ENCODE measurements at regions of chr3 and their contacts with region 1.

Region 1: GRCh38 chr3:113867506-113867905 is 28.9 kb downstream of the GRAMD1C start:
- DNase-seq: no peak
- H3K4me3 ChIP-seq: no peak overlapping the region
- H3K27ac ChIP-seq: no peak overlapping the region
- H3K4me1 ChIP-seq: no peaks in the 10 kb centered on the region
- H3K27me3 ChIP-seq: no peaks in the 10 kb centered on the region
- CTCF ChIP-seq: no peak

Region 2: GRCh38 chr3:113927556-113927955 is 60.0 kb after region 1 on chr3:
- CTCF ChIA-PET with region 1: no interaction called
- POLR2A ChIA-PET with region 1: interaction called, 11 read pairs
- intact Hi-C with region 1: no loop called
- DNase-seq: no peak
- H3K4me3 ChIP-seq: no peak overlapping the region
- H3K27ac ChIP-seq: no peak overlapping the region
- H3K4me1 ChIP-seq: no peaks in the 10 kb centered on the region
- H3K27me3 ChIP-seq: no peaks in the 10 kb centered on the region
- CTCF ChIP-seq: no peak

Measured in A673 (cell line).